ENCODE measurements at regions of chr6 and their contacts with region 1.

Region 1: GRCh38 chr6:41920921-41921711 is at the starts of genes BYSL and MED20:
- DNase-seq: peak; percentile 79
- H3K4me3 ChIP-seq: peak within 1 kb of the TSS; percentile 74
- H3K27ac ChIP-seq: peak within 1 kb of the TSS; percentile 95
- H3K27me3 ChIP-seq: no peaks in the 10 kb centered on the region
- CTCF ChIP-seq: peak; percentile 95
- polyA plus RNA-seq, gene BYSL: 18.1 and 25.1 TPM in 2 replicates
- polyA plus RNA-seq, gene MED20: 45.0 and 48.6 TPM in 2 replicates

Region 2: DNA sequence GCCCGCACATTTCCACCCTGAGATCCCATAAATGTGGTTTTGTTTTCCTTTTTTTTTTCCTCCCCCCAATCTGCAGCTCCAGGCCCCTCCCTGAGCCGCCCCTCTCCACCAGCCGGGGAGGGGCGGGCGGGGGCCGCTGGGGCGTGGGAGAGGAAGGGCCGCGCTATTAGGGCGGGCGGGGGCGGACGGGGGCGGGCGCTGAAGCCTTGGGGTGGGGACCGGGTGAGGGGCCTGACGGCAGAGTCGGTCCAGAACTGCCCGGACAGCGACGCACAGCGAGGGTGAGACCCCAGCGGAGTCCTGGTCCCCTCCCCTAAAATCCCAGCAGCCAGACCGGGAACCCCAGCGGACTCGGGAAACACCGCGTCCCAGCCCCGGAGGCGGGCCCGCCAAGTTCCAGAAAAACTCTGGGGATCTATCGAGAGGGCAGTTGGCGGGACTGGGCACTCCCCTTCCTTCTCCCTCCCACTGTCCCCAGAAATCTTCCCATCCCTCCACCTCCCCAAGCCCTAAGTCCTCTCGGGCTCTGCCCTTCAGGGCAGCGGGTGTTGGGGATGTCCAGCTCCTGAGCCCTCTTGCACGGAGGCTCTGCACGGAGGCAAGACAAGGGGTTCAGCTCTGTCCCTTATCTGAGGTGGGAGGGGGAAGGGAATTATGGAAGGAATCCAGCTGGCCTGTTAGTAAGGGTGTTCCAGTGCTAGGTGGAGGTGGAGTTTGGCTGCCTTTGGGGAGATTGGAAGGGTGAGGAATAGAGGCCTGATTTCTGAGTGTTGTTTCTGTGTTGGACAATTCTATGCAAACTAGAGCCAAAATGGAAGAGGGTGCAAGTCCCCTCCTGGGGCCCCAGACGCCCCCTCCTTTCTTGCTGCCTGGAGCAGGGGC is 140.3 kb before region 1 on chr6 and contains the start of gene PRICKLE4:
- CTCF ChIA-PET with region 1: interaction called, 67 read pairs
- POLR2A ChIA-PET with region 1: no interaction called
- DNase-seq: no peak
- H3K4me3 ChIP-seq: peak within 1 kb of the TSS; percentile 78
- H3K27ac ChIP-seq: no peak within 1 kb of the TSS
- H3K27me3 ChIP-seq: no peaks in the 10 kb centered on the region
- CTCF ChIP-seq: no peak
- polyA plus RNA-seq, gene PRICKLE4: 0.12 TPM in 1 of 2 replicates, not detected in the other

Region 3: DNA sequence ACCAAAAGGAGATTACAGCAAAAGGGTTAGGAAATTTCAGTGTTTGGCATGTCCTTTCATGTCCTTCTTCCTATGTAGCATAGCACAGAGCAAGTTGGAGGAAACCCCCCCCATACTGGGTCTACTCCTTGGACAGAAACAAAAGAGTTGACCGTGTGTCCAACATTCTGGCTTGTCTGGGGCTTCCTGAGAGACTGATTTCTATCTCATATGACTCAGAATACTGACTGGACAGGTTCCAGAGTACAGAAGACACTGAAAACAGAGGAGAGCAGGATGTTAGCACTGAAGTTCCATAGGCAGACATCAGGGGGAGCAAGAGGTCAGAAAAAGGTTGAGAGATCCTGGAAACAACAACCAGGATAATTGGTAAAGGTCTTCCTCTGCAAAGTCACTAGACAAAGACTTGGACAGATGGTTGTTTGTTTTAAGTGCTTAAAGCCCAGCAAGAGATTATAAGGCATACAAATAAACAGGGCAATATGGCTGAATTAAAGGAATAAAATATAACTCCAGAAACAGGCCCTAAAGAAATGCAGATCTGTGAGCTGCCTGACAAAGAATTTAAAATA is 74.4 kb before region 1 on chr6:
- CTCF ChIA-PET with region 1: interaction called, 27 read pairs
- POLR2A ChIA-PET with region 1: no interaction called
- DNase-seq: peak; percentile 84
- H3K4me3 ChIP-seq: no peak overlapping the region
- H3K27ac ChIP-seq: peak overlapping the region; percentile 73
- H3K27me3 ChIP-seq: no peaks in the 10 kb centered on the region
- CTCF ChIP-seq: peak; percentile 92

Region 4: GRCh38 chr6:41901882-41902519 is 19.1 kb before region 1 on chr6:
- CTCF ChIA-PET with region 1: interaction called, 20 read pairs
- POLR2A ChIA-PET with region 1: interaction called, 10 read pairs
- DNase-seq: no peak
- H3K4me3 ChIP-seq: no peak overlapping the region
- H3K27ac ChIP-seq: no peak overlapping the region
- H3K27me3 ChIP-seq: no peaks in the 10 kb centered on the region
- CTCF ChIP-seq: peak; percentile 30; the same call in 1 of the 2 replicates

Region 5: DNA sequence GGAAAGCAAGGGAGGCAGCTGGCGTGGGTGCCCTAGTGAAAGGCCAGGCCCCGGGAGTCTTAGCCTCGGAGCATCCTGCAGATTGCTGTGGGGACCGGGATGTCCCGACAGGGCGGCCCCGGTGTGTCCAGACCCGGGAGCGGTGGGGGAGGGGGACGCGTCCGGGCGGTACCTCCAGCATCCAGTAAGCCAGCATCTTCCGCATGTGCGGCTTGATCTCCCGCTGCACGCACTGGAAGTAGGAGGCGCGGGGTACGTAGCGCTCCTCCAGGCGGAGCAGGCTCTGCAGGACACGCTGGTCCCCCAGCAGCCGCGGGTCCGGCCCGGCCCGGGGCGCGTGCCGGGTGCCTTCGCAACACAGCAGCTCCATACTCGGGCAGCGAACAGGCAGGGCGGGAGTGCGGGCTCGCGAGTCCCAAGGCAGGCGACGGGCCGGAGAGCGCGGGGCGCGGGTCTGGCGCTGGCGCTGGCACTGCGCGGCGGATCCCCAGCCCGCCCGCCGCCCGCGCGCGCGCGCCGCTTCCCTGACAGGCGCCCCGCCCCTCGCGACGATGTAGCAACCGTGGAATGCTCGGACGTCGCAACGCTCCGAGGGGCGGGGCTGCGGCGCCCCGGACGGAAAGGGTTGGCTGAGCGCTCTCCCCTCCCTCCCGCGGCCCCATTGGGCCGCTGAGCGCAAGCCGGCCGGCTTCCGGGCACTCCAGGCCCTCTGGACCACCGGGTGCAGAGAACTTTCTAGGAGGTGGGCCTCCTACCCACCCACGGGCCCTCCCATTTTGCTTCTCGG is 20.4 kb after region 1 on chr6 and contains the start of gene CCND3:
- CTCF ChIA-PET with region 1: interaction called, 144 read pairs
- POLR2A ChIA-PET with region 1: interaction called, 6 read pairs
- DNase-seq: peak; percentile 75
- H3K4me3 ChIP-seq: peak within 1 kb of the TSS; percentile 98
- H3K27ac ChIP-seq: peak within 1 kb of the TSS; percentile 57
- H3K27me3 ChIP-seq: no peaks in the 10 kb centered on the region
- CTCF ChIP-seq: no peak
- polyA plus RNA-seq, gene CCND3: 25.8 and 30.9 TPM in 2 replicates

Region 6: GRCh38 chr6:42043787-42044475 is 122.8 kb after region 1 on chr6:
- CTCF ChIA-PET with region 1: interaction called, 42 read pairs
- POLR2A ChIA-PET with region 1: interaction called, 3 read pairs
- DNase-seq: no peak
- H3K4me3 ChIP-seq: no peak overlapping the region
- H3K27ac ChIP-seq: no peak overlapping the region
- H3K27me3 ChIP-seq: no peaks in the 10 kb centered on the region
- CTCF ChIP-seq: peak; percentile 99

Measured in AG04450 (cell line).